ENCODE measurements at regions of chr15 and their contacts with region 1.

Region 1: GRCh38 chr15:41116116-41116871 is at the start of gene INO80:
- DNase-seq: peak; percentile 92 to 98 (median 96)
- ATAC-seq: peak; percentile 90
- H3K4me3 ChIP-seq: peak within 1 kb of the TSS; percentile 85
- H3K4me3 Mint-ChIP-seq: peak within 1 kb of the TSS; percentile 90 to 99 (median 96)
- H3K27ac ChIP-seq: peak within 1 kb of the TSS; percentile 80
- H3K27ac Mint-ChIP-seq: peak within 1 kb of the TSS; percentile 98 to 100 (median 99)
- H3K4me1 ChIP-seq: peaks cover 14 to 16% of the 10 kb centered on the region in 2 donors
- H3K4me1 Mint-ChIP-seq: peaks cover 5 to 40% (median 30%) of the 10 kb centered on the region in 7 donors
- H3K27me3 ChIP-seq: no peaks in the 10 kb centered on the region
- H3K27me3 Mint-ChIP-seq: peaks cover 0 to 4% (median 0%) of the 10 kb centered on the region in 5 donors
- total RNA-seq, gene INO80: 30.1 to 36.5 (median 32.3) TPM

Region 2: GRCh38 chr15:40477642-40478327 is 638.5 kb before region 1 on chr15:
- CTCF ChIA-PET with region 1: no interaction called
- POLR2A ChIA-PET with region 1: no interaction called
- intact Hi-C with region 1: no loop called
- DNase-seq: no peak
- ATAC-seq: no peak
- H3K4me3 ChIP-seq: no peak overlapping the region
- H3K4me3 Mint-ChIP-seq: no peak overlapping the region
- H3K27ac ChIP-seq: no peak overlapping the region
- H3K27ac Mint-ChIP-seq: peak overlapping the region in 2 of 9 donors; percentile 21 to 58
- H3K4me1 ChIP-seq: no peaks in the 10 kb centered on the region
- H3K4me1 Mint-ChIP-seq: peaks cover 0 to 11% (median 4%) of the 10 kb centered on the region in 7 donors
- H3K27me3 ChIP-seq: no peaks in the 10 kb centered on the region
- H3K27me3 Mint-ChIP-seq: peaks cover 0 to 52% (median 3%) of the 10 kb centered on the region in 5 donors

Region 3: DNA sequence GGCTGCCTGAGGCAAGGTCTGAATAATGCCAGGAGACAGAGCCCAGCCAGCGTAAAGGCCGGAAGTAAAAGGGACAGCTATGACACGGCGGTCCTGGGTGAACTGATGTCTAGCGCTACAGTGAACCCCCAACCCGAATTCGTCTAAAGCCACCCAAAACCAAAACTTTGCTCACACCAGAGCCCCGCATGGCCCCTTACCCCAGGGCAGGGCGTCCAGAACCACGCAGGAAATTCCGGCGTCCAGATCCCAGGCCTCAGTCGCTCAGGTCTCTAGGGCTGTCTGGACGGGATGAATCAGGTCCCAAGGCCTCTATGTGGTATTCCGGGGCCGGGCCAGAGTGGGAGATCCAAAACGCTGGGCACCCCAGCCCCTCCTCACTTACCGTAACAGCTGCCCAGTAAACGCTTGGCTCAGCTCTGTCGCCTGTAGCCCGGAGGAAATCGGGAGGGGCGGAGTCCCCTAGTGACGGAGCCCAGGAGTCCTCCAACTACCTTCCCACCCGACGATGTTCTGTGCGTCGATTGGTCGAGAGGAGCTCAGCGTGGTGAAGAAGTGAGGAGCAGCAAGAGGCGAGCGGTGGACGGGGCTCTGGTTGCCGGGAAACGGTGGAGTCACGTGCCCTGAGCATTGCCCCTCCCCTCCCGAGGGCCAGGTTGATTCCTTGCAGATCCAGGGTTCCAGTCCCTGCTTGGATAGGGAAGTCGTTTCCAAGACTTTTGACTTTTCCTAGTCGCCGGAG is 551.5 kb before region 1 on chr15 and contains the start of gene CCDC32:
- CTCF ChIA-PET with region 1: no interaction called
- POLR2A ChIA-PET with region 1: no interaction called
- intact Hi-C with region 1: loop called (anchors 1 to 5 kb)
- DNase-seq: peak; percentile 75 to 96 (median 93)
- ATAC-seq: peak; percentile 95
- H3K4me3 ChIP-seq: peak within 1 kb of the TSS; percentile 85
- H3K4me3 Mint-ChIP-seq: peak within 1 kb of the TSS; percentile 80 to 97 (median 96)
- H3K27ac ChIP-seq: peak within 1 kb of the TSS; percentile 96
- H3K27ac Mint-ChIP-seq: peak within 1 kb of the TSS; percentile 82 to 98 (median 95)
- H3K4me1 ChIP-seq: peaks cover 11 to 15% of the 10 kb centered on the region in 2 donors
- H3K4me1 Mint-ChIP-seq: peaks cover 35 to 57% (median 55%) of the 10 kb centered on the region in 7 donors
- H3K27me3 ChIP-seq: no peaks in the 10 kb centered on the region
- H3K27me3 Mint-ChIP-seq: peaks cover 0 to 8% (median 0%) of the 10 kb centered on the region in 5 donors
- total RNA-seq, gene CCDC32: 22.4 to 37.3 (median 33.3) TPM

Region 4: GRCh38 chr15:40893733-40894688 is 222.3 kb before region 1 on chr15 and contains the start of gene VPS18:
- CTCF ChIA-PET with region 1: no interaction called
- POLR2A ChIA-PET with region 1: interaction called, 10 read pairs
- intact Hi-C with region 1: loop called in 1 of 2 experiments (anchors 1 kb)
- DNase-seq: peak; percentile 96 to 99 (median 98)
- ATAC-seq: peak; percentile 99
- H3K4me3 ChIP-seq: peak within 1 kb of the TSS; percentile 94
- H3K4me3 Mint-ChIP-seq: peak within 1 kb of the TSS; percentile 96 to 99 (median 98)
- H3K27ac ChIP-seq: peak within 1 kb of the TSS; percentile 83
- H3K27ac Mint-ChIP-seq: peak within 1 kb of the TSS; percentile 87 to 98 (median 96)
- H3K4me1 ChIP-seq: peaks cover 17 to 18% of the 10 kb centered on the region in 2 donors
- H3K4me1 Mint-ChIP-seq: peaks cover 30 to 47% (median 37%) of the 10 kb centered on the region in 7 donors
- H3K27me3 ChIP-seq: no peaks in the 10 kb centered on the region
- H3K27me3 Mint-ChIP-seq: peaks cover 0 to 7% (median 0%) of the 10 kb centered on the region in 5 donors
- total RNA-seq, gene VPS18: 19.9 to 22.3 (median 20.5) TPM

Region 5: GRCh38 chr15:41180206-41180789 is 64.0 kb after region 1 on chr15:
- CTCF ChIA-PET with region 1: no interaction called
- POLR2A ChIA-PET with region 1: no interaction called
- intact Hi-C with region 1: loop called in 1 of 2 experiments (anchors 10 kb)
- DNase-seq: no peak
- ATAC-seq: no peak
- H3K4me3 ChIP-seq: no peak overlapping the region
- H3K4me3 Mint-ChIP-seq: no peak overlapping the region
- H3K27ac ChIP-seq: no peak overlapping the region
- H3K27ac Mint-ChIP-seq: no peak overlapping the region
- H3K4me1 ChIP-seq: no peaks in the 10 kb centered on the region
- H3K4me1 Mint-ChIP-seq: peaks cover 0 to 2% (median 0%) of the 10 kb centered on the region in 7 donors
- H3K27me3 ChIP-seq: no peaks in the 10 kb centered on the region
- H3K27me3 Mint-ChIP-seq: peaks cover 0 to 17% (median 0%) of the 10 kb centered on the region in 5 donors

Region 6: GRCh38 chr15:41401904-41402267 is 285.6 kb after region 1 on chr15:
- CTCF ChIA-PET with region 1: no interaction called
- POLR2A ChIA-PET with region 1: no interaction called
- intact Hi-C with region 1: loop called in 1 of 2 experiments (anchors 2 kb)
- DNase-seq: no peak
- ATAC-seq: no peak
- H3K4me3 ChIP-seq: peak overlapping the region; percentile 92
- H3K4me3 Mint-ChIP-seq: peak overlapping the region; percentile 87 to 97 (median 96)
- H3K27ac ChIP-seq: peak overlapping the region; percentile 81
- H3K27ac Mint-ChIP-seq: peak overlapping the region; percentile 89 to 96 (median 94)
- H3K4me1 ChIP-seq: peaks cover 0 to 14% of the 10 kb centered on the region in 2 donors
- H3K4me1 Mint-ChIP-seq: peaks cover 0 to 32% (median 24%) of the 10 kb centered on the region in 7 donors
- H3K27me3 ChIP-seq: no peaks in the 10 kb centered on the region
- H3K27me3 Mint-ChIP-seq: no peaks in the 10 kb centered on the region

Region 7: DNA sequence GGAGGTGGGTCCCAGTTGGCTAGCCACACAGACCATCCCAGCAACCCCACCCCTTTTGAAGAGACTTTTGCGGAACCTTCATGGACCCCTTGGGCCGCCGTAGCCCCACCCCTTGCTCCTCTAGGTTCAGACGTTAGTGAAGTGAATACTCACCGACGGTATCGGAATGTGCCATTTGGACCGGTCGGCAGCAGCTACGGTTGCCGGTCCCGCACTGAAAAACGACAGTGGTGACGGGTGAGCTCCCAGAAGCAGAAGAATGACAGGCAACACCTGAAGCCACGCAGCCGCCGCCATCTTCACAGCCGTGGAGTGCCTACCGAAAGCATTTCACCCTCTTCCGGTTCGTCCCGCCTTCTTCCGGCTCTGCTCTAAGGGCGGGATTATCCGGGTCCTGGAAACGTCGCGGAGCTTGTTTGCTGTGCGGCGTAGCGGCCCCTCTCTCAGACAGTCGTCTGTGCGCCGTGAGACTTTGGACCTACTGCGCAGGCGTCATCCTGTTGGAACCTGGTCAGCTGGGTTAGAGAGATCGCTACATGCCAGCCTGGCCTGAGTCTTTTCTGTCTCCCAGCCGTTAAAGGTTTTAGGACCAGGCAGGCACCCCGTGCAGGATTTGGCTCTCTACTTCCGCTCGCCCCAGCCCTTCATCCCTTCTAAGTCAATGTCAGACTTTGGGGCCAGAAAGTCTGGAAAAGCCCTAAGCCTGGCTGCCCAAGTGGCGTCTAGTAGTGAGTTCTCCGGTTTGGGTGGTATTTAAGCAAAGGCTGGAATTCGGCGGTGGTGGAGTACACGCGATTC is 1157.0 kb after region 1 on chr15 and contains the starts of genes GANC and TMEM87A:
- CTCF ChIA-PET with region 1: no interaction called
- POLR2A ChIA-PET with region 1: interaction called, 8 read pairs
- intact Hi-C with region 1: loop called (anchors 1 to 10 kb)
- DNase-seq: peak; percentile 70 to 96 (median 94)
- ATAC-seq: peak; percentile 95
- H3K4me3 ChIP-seq: peak within 1 kb of the TSS; percentile 71
- H3K4me3 Mint-ChIP-seq: peak within 1 kb of the TSS; percentile 91 to 100 (median 97)
- H3K27ac ChIP-seq: peak within 1 kb of the TSS; percentile 94
- H3K27ac Mint-ChIP-seq: peak within 1 kb of the TSS; percentile 97 to 100 (median 100)
- H3K4me1 ChIP-seq: peaks cover 25 to 26% of the 10 kb centered on the region in 2 donors
- H3K4me1 Mint-ChIP-seq: peaks cover 30 to 76% (median 67%) of the 10 kb centered on the region in 7 donors
- H3K27me3 ChIP-seq: no peaks in the 10 kb centered on the region
- H3K27me3 Mint-ChIP-seq: no peaks in the 10 kb centered on the region
- total RNA-seq, gene GANC: 31.3 to 57.2 (median 45.4) TPM
- total RNA-seq, gene TMEM87A: 41.8 to 61.8 (median 53.7) TPM

Measured in naive thymus-derived CD4-positive, alpha-beta T cell (primary cell).